HCT116 (cell line): ENCODE measurements at regions of chr12 and their contacts with region 1.

Region 1: DNA sequence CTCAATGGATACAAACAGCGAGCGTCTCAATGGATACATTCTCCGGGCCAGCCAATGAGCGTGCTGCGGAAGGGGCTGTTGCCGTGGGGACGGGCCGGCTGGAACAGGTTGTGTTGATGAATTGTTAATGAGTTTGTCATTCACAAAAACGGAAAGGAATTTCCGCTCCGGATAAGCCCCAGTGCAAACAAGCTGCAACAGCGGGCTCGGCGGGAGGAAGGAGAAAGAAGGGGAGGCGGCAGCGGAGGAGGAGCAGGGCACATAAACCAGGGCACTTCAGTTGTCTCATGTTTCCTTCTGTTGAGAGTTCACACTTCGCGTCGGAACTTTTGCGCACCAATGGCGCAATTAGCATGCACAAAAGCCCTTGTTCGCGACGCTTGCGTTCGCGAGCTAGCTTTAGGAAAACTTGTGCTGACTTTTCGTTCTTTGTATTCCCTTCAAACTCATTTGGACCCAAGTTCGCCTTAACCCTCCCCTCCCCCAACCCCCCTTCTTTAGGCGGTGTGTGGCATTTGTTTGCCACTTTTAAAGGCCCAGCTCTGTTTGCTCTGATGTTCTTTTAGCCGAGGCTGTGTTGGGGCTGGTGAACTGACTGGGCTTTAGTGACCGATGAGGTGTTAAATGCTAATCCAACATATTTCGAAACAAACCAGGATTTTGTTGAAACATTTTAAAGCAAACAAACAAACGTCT is at the start of gene DUSP6:
- DNase-seq: peak; percentile 99
- ATAC-seq: peak; percentile 75
- H3K4me3 ChIP-seq: peak within 1 kb of the TSS; percentile 90 to 94
- H3K27ac ChIP-seq: peak within 1 kb of the TSS; percentile 99
- H3K4me1 ChIP-seq: peaks cover 44 to 57% of the 10 kb centered on the region in 2 experiments
- H3K27me3 ChIP-seq: no peaks in the 10 kb centered on the region
- CTCF ChIP-seq: no peak
- POLR2A ChIP-seq: no peak
- RAD21 ChIP-seq: no peak
- total RNA-seq, gene DUSP6: 219 TPM

Region 2: GRCh38 chr12:89019408-89020120 is 333.1 kb before region 1 on chr12:
- CTCF ChIA-PET with region 1: interaction called, 4 read pairs
- POLR2A ChIA-PET with region 1: interaction called, 3 read pairs
- RAD21 ChIA-PET with region 1: no interaction called
- intact Hi-C with region 1: loop called (anchors 1 kb)
- DNase-seq: peak; percentile 83
- ATAC-seq: peak; percentile 90
- H3K4me3 ChIP-seq: peak overlapping the region; percentile 15 to 40
- H3K27ac ChIP-seq: no peak overlapping the region
- H3K4me1 ChIP-seq: peaks cover 2 to 30% of the 10 kb centered on the region in 2 experiments; a peak in 3 of 4 replicates
- H3K27me3 ChIP-seq: no peaks in the 10 kb centered on the region
- CTCF ChIP-seq: peak; percentile 72 to 88 (median 82)
- POLR2A ChIP-seq: no peak
- RAD21 ChIP-seq: peak; percentile 95

Region 3: GRCh38 chr12:89225808-89226411 is 126.7 kb before region 1 on chr12:
- CTCF ChIA-PET with region 1: no interaction called
- POLR2A ChIA-PET with region 1: interaction called, 11 read pairs
- RAD21 ChIA-PET with region 1: no interaction called
- intact Hi-C with region 1: loop called (anchors 5 kb)
- DNase-seq: peak; percentile 97
- ATAC-seq: peak; percentile 91
- H3K4me3 ChIP-seq: peak overlapping the region; percentile 12 to 48; a peak in 3 of 4 replicates
- H3K27ac ChIP-seq: peak overlapping the region; percentile 70
- H3K4me1 ChIP-seq: peaks cover 32 to 49% of the 10 kb centered on the region in 2 experiments
- H3K27me3 ChIP-seq: no peaks in the 10 kb centered on the region
- CTCF ChIP-seq: no peak
- POLR2A ChIP-seq: no peak
- RAD21 ChIP-seq: peak; percentile 49

Region 4: DNA sequence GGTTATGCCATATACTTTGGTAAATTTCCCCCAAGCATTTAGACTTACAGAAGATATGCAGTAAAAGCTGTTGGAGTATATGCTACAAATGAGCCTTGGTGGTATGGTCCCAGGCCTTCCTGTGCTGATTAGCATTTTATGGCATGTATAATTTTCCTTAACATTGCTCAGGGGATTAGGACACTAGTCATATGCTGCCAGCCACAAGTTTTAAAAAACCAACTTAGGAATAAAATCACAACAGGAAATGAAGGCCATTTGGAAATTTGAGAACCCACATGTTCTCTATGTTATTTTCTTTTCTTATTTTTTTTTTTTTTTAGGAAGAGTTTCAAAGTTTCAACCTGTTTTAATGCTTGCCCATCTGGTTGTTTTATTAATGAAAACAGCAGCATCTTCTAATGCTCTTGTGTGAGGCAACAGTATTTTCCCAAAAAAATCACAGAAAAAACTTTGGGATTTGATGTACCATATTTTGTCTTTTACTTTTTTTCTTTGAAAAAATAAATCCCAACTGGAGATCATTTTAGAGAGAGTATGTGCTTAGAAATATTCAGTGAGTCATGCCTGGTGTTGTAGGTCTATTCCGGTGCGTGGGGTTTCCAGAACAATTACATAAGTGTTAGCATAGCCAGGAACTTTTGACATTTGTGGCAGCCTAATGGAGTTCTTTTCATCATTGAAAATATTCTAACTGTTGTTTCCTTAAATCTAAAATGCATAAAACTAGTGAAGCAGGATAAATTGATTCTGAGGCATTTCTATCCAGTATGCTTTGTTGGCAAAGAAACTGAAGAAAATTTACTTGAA is 21.3 kb after region 1 on chr12:
- CTCF ChIA-PET with region 1: no interaction called
- POLR2A ChIA-PET with region 1: interaction called, 17 read pairs
- RAD21 ChIA-PET with region 1: interaction called in 1 of 2 experiments, 3 read pairs
- intact Hi-C with region 1: no loop called
- DNase-seq: no peak
- ATAC-seq: no peak
- H3K4me3 ChIP-seq: no peak overlapping the region; a peak in 1 of 4 replicates
- H3K27ac ChIP-seq: 0 out of 2 replicates have a peak overlapping the region, but pooled peaks have one; percentile 42
- H3K4me1 ChIP-seq: peaks cover 61 to 69% of the 10 kb centered on the region in 2 experiments
- H3K27me3 ChIP-seq: no peaks in the 10 kb centered on the region
- CTCF ChIP-seq: no peak
- POLR2A ChIP-seq: no peak
- RAD21 ChIP-seq: no peak

Region 5: GRCh38 chr12:89524541-89525285 is 172.1 kb after region 1 on chr12 and contains the start of gene GALNT4:
- CTCF ChIA-PET with region 1: no interaction called
- POLR2A ChIA-PET with region 1: interaction called, 5 read pairs
- RAD21 ChIA-PET with region 1: no interaction called
- intact Hi-C with region 1: loop called (anchors 5 kb)
- DNase-seq: peak; percentile 62
- ATAC-seq: peak; percentile 83
- H3K4me3 ChIP-seq: peak within 1 kb of the TSS; percentile 81 to 86
- H3K27ac ChIP-seq: peak within 1 kb of the TSS; percentile 72
- H3K4me1 ChIP-seq: peaks cover 4 to 17% of the 10 kb centered on the region in 2 experiments; a peak in 3 of 4 replicates
- H3K27me3 ChIP-seq: no peaks in the 10 kb centered on the region
- CTCF ChIP-seq: peak; percentile 63 to 67 (median 65); a peak in 5 of 6 replicates
- POLR2A ChIP-seq: no peak
- RAD21 ChIP-seq: peak; percentile 60
- total RNA-seq, gene GALNT4: 2.8 TPM